ENCODE measurements at regions of chr4 and their contacts with region 1.

Region 1: DNA sequence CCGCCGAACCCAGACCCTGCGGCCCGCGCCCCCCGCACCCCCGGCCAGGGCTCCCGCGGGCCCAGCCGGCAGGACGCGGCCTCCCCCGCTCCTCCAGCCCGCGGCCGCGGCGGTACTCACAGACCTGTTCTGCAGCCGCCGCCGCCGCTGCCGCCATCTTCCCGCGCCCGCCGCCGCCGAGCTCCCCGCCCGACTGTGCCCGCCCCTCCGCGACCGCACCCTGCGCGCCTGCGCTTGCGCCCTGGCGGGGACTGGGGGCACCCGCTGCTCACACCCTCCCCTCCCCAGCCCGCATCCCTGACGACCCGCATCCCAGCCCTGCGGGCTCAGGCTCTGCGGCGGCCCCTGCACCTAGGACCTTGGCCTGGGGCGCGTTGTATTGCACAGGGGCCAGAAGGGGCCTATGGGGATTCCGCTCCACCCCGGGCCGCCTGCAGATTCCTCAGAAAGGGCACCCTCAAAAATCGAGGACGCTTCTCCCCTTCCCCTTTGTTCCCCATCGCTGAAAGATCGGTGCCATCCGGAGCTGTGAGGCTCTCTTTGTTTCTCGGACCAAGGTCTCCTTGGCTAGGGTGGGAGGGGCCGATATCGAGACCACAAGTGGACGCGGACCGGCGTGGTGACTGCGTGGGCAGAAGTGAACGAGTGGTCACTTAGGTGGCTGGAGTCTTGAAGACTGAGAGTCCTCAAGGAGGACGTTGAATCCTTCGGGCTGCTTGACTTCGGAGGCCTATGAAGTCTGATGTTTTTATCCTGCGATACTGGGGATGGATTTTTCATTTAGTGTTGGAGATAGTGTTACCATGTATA is at the start of gene SGCB:
- DNase-seq: peak; percentile 68
- H3K4me3 ChIP-seq: peak within 1 kb of the TSS; percentile 68 to 81 (median 72)
- H3K27ac ChIP-seq: peak within 1 kb of the TSS; percentile 54 to 84 (median 80)
- H3K4me1 ChIP-seq: peaks cover 0 to 29% (median 17%) of the 10 kb centered on the region in 4 donors
- H3K27me3 ChIP-seq: peaks cover 9% of the 10 kb centered on the region
- CTCF ChIP-seq: no peak
- EP300 ChIP-seq: no peak
- POLR2A ChIP-seq: no peak
- total RNA-seq, gene SGCB: 4.9 to 26.4 (median 15.7) TPM

Region 2: DNA sequence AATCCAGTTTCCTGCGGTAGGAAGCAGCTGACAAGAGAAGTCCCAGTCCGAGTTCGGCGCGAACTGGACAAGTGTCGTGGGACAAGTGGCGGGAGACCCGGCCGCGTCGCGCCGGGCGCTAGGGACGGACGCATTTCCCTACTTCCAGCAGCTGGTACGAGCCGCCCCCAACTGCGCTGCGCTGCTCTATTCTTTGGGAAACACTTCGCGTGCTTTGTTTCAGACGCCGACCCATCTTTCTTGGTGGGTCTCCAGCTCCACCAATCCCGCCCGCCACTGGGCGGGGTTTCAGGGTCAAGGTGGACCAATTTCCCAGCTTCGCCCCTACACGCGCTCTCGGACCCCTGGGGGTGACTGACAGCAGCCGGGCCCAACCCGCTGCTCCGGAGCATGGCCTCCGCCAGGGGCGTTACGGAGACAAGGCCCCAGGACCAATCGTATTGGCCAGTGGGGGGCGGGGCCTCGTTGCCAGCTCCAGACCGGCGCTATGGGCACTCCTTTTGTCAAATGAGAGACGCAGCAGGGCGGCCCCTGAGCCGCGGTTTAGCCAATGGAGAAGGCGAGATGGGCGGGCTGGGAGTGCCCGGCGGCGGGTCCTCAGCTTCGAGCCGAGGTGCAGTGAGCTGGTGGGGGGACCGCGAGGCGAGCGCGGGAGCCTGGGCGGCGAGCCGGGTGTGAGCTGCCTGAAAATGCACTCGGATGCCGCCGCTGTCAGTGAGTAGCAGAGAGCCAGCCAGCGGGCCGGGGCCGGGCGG is 195.6 kb before region 1 on chr4 and contains the start of gene DCUN1D4:
- in situ Hi-C with region 1: loop called in 1 of 4 experiments (anchors 10 kb)
- intact Hi-C with region 1: no loop called
- DNase-seq: peak; percentile 100
- H3K4me3 ChIP-seq: peak within 1 kb of the TSS; percentile 72 to 94 (median 90)
- H3K27ac ChIP-seq: peak within 1 kb of the TSS; percentile 97 to 99 (median 98)
- H3K4me1 ChIP-seq: peaks cover 6 to 16% (median 8%) of the 10 kb centered on the region in 4 donors
- H3K27me3 ChIP-seq: no peaks in the 10 kb centered on the region
- CTCF ChIP-seq: peak; percentile 25 to 68 (median 42)
- EP300 ChIP-seq: no peak
- POLR2A ChIP-seq: peak; percentile 79
- total RNA-seq, gene DCUN1D4: 25.1 to 66.4 (median 40.9) TPM

Measured in transverse colon (tissue), 4 donors.